Right ventricle myocardium superior (tissue), 1 donor: ENCODE measurements at regions of chr11 and their contacts with region 1.

Region 1: GRCh38 chr11:65888163-65888814 is at the start of gene FIBP:
- DNase-seq: peak; percentile 98
- ATAC-seq: peak; percentile 86
- total RNA-seq, gene FIBP: 37.7 TPM

Region 2: DNA sequence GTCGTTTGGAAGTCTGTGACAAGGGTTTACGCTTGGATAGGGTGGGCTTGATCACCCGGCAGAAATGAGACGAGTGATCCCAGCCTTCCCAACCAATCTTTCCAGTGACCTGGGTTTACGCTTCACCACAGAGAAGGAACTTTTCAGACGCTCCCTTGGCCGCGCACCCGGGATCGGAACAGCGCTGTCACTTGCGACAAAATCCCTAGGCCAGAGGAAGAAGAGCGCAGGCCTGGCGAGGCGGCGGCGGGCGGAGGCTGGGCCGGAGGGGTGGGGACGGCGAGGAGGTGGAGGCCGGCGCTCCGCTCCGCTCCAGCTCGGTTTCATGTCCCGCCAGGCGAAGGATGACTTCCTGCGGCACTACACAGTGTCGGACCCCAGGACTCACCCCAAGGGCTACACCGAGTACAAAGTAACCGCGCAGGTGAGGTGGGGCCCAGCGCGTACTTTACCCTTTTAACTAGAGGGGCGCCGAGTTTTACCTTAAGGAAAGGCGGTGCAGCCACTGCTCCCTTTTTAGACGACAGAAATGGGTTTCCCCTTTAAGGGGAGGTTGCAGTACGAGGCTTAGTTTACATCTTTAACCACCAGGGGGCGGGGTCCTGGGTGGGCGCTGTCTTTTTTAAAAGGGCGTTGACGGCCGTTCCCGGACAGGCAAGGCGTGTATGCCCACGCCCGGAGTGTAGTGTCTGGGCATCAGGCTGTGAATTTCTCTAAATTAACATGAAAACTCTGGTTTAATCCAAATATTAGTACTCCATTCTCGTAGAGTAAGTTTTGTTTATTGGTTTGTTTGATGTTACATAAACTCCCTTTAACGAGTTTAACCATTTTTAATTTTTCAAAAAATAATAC is 860.8 kb before region 1 on chr11 and contains the start of gene SNX15:
- intact Hi-C with region 1: no loop called
- DNase-seq: peak; percentile 94
- ATAC-seq: peak; percentile 99
- total RNA-seq, gene SNX15: 18.0 TPM

Region 3: DNA sequence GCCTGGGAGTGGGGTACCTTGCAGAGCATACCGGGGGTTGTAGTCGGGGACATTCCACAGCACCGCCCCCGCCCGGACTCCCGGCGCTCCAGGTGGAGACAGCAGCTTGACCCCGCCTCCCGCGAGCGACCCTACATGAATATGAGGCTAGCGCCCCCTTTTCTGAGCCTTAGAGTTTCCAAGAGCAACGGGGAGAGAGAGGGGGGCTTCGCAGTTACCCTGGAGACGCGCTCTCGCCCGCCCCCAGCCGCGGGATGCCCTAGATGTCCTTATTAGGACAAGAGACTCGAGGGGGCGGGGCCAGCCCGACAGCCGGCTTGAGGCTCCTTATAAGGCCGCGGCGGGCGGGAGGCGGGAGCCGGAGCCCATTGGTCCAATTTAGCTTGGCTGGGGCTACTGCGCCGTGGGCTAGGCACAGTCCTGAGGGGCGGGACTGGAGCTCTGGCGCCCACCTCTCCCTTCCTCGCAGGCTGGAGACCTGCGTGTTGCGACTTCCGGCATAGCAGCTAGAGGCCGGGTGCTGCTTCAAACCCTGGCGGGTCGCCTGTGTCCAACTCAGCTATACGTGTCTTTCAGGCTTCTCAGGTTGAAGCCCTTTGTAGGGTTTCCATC is 29.0 kb before region 1 on chr11:
- intact Hi-C with region 1: loop called (anchors 2 kb)
- DNase-seq: peak; percentile 100
- ATAC-seq: peak; percentile 78